ENCODE measurements at regions of chr5 and their contacts with region 1.

Region 1: GRCh38 chr5:55102348-55102747 is at the start of gene GZMA:
- DNase-seq: peak; percentile 56
- H3K4me3 Mint-ChIP-seq: peak within 1 kb of the TSS; percentile 30
- H3K27ac Mint-ChIP-seq: no peak within 1 kb of the TSS
- H3K4me1 Mint-ChIP-seq: peaks cover 58% of the 10 kb centered on the region
- H3K27me3 Mint-ChIP-seq: peaks cover 9% of the 10 kb centered on the region
- total RNA-seq, gene GZMA: 0.24 TPM in 1 of 2 experiments, not detected in the other

Region 2: GRCh38 chr5:55123365-55123764 is 21.0 kb after region 1 on chr5:
- CTCF ChIA-PET with region 1: no interaction called
- intact Hi-C with region 1: no loop called
- DNase-seq: no peak
- H3K4me3 Mint-ChIP-seq: no peak overlapping the region
- H3K27ac Mint-ChIP-seq: no peak overlapping the region
- H3K4me1 Mint-ChIP-seq: no peaks in the 10 kb centered on the region
- H3K27me3 Mint-ChIP-seq: no peaks in the 10 kb centered on the region

Region 3: DNA sequence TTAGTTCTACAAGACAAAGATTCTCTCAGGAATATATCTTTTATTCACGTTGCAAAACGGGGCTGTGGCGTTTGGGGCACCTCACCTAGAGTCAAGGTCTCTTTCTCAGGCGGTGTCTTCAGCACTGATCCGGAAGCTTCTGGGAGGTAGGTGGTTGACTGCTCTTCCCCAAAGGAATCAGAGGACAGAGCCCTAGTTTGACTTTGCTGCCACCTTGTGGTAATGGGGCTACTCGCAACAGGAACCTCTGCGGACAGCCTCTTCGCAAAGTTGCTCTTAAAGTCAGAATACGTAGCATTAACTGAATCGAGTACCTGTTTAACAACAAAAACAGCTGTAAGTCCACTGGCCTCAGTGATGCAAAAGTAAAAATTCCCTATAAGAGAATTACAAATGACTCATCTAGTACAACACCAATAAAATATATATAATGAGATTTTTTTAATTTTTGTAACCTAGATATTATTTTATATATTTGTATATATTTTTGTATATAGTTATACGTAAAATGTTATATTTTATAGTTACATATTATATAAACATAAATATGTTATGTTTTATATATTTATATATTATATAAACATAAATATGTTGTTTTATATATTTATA is 44.3 kb after region 1 on chr5:
- CTCF ChIA-PET with region 1: interaction called, 3 read pairs
- intact Hi-C with region 1: loop called (anchors 5 kb)
- DNase-seq: peak; percentile 90
- H3K4me3 Mint-ChIP-seq: no peak overlapping the region
- H3K27ac Mint-ChIP-seq: no peak overlapping the region
- H3K4me1 Mint-ChIP-seq: peaks cover 12% of the 10 kb centered on the region
- H3K27me3 Mint-ChIP-seq: peaks cover 4% of the 10 kb centered on the region

Region 4: DNA sequence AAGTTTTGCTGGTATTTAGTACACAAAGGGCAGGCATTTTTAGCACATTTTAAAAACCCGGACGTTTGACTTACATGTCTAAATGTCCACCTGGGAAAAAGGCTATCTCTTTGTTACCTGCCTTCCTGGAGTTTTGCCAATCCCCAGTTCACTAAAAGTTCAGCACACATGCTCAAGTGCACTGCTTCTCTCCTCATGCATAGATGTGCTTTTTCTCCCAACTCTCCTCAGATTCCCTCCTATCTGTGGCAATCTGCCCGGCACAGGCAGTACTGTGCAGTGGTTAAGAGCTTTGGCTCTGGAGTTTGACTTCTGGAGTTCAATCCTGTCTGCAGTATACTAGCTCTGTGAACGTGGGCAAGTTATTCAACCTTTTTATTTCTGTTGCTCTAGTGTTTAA is 139.4 kb after region 1 on chr5:
- CTCF ChIA-PET with region 1: no interaction called
- intact Hi-C with region 1: no loop called
- DNase-seq: no peak
- H3K4me3 Mint-ChIP-seq: no peak overlapping the region
- H3K27ac Mint-ChIP-seq: no peak overlapping the region
- H3K4me1 Mint-ChIP-seq: no peaks in the 10 kb centered on the region
- H3K27me3 Mint-ChIP-seq: peaks cover 19% of the 10 kb centered on the region

Region 5: GRCh38 chr5:55540024-55540423 is 437.7 kb after region 1 on chr5:
- CTCF ChIA-PET with region 1: no interaction called
- intact Hi-C with region 1: loop called (anchors 5 kb)
- DNase-seq: no peak
- H3K4me3 Mint-ChIP-seq: no peak overlapping the region
- H3K27ac Mint-ChIP-seq: no peak overlapping the region
- H3K4me1 Mint-ChIP-seq: peaks cover 39% of the 10 kb centered on the region
- H3K27me3 Mint-ChIP-seq: no peaks in the 10 kb centered on the region